ENCODE measurements at regions of chr1 and their contacts with region 1.

Region 1: DNA sequence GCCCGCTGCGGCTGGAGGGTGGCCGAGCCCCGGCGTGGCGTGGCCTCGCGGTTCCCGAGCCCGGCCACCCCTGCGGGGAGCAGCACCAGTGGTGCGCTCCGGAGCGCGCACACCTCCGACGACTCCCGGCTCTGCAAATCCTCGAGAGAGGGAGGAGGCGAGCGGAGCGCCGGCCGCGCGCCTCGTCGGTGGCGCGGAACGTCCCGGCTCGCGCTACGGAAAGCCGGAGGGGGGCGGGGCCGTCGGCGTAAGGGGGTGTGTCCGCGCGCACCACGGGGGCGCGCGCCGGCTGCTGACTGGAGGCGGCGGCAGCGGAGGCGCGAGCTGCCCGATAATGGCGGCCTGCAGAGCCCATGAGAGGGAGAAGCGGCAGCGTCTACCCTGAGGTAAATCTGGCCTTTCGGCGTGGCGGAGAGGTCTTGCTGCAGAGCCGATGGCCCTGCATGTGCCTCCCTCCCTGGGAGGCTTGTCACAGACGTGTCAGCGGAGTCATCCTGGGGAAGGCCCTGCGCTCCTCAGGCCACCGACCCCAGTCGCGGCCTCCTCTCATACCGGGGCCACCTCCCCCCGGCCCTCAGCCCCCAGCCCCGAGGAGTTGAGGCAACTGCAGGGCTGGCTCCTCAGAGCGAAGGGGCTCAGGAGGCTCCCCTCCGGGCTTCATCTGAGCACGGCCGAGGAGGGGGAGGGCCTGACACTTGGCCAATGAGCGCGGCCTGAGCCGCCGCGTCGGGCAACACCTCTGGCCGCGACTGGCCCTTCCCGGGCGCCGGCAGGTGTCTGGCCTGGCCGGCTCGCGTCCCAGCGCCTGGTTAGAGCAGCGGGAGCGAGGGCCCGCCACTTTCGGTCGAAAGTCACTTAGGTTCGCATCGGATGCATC is at the start of gene PDIK1L:
- DNase-seq: peak; percentile 91
- H3K4me3 Mint-ChIP-seq: peak within 1 kb of the TSS; percentile 96
- H3K27ac Mint-ChIP-seq: peak within 1 kb of the TSS; percentile 92
- H3K4me1 Mint-ChIP-seq: peaks cover 36% of the 10 kb centered on the region
- H3K27me3 Mint-ChIP-seq: no peaks in the 10 kb centered on the region
- total RNA-seq, gene PDIK1L: 15.5 and 18.9 TPM in 2 replicates

Region 2: DNA sequence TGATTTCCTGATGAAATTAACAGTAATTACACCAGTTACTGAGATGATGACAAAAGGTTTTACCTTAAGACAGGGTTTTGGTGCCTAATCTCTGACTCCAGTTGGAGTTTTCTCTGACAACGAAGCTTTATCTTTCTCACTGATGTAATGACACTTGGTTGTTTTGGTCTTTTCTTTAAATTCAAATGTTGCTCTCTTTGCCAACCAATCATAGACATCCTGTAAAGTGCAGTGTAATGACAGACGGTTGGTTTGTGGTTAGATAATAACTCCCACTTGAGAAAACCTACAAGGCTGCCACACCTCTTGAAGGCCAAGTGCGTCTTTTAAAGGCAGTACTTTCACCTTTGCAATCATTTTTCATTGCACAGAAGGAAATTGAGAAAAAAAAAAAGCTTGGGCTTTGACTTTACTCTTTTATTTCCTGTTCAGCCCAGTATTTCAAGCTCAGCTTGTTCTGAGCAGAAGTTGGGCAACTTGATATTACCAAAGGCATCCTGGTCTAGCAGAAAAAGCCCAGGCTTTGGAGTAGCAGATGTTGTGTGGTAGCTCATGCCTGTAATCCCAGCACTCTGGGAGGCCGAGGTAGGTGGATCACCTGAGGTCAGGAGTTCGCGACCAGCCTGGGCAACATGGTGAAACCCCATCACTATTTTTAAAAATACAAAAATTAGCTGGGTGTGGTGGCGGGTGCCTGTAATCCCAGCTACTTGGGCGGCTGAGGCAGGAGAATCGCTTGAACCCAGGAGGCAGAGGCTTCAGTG is 14.7 kb after region 1 on chr1:
- intact Hi-C with region 1: loop called (anchors 1 kb)
- DNase-seq: peak; percentile 66
- H3K4me3 Mint-ChIP-seq: peak overlapping the region; percentile 64
- H3K27ac Mint-ChIP-seq: peak overlapping the region; percentile 89
- H3K4me1 Mint-ChIP-seq: peaks cover 62% of the 10 kb centered on the region
- H3K27me3 Mint-ChIP-seq: no peaks in the 10 kb centered on the region